AG04450 (cell line): ENCODE measurements at regions of chr11 and their contacts with region 1.

Region 1: GRCh38 chr11:19903620-19904069 is 191.0 kb downstream of the NAV2 start:
- DNase-seq: peak; percentile 64
- H3K4me3 ChIP-seq: no peak overlapping the region
- H3K27ac ChIP-seq: no peak overlapping the region
- H3K27me3 ChIP-seq: no peaks in the 10 kb centered on the region
- CTCF ChIP-seq: peak; percentile 87

Region 2: GRCh38 chr11:19561011-19561410 is 342.6 kb before region 1 on chr11:
- CTCF ChIA-PET with region 1: interaction called, 182 read pairs
- POLR2A ChIA-PET with region 1: no interaction called
- DNase-seq: no peak
- H3K4me3 ChIP-seq: no peak overlapping the region
- H3K27ac ChIP-seq: no peak overlapping the region
- H3K27me3 ChIP-seq: peaks cover 13% of the 10 kb centered on the region
- CTCF ChIP-seq: no peak

Region 3: GRCh38 chr11:19703211-19703610 is 200.4 kb before region 1 on chr11:
- CTCF ChIA-PET with region 1: no interaction called
- POLR2A ChIA-PET with region 1: no interaction called
- DNase-seq: no peak
- H3K4me3 ChIP-seq: no peak overlapping the region
- H3K27ac ChIP-seq: no peak overlapping the region
- H3K27me3 ChIP-seq: no peaks in the 10 kb centered on the region
- CTCF ChIP-seq: no peak

Region 4: GRCh38 chr11:19742588-19743292 is 160.9 kb before region 1 on chr11:
- CTCF ChIA-PET with region 1: interaction called, 48 read pairs
- POLR2A ChIA-PET with region 1: no interaction called
- DNase-seq: peak; percentile 50
- H3K4me3 ChIP-seq: no peak overlapping the region
- H3K27ac ChIP-seq: no peak overlapping the region
- H3K27me3 ChIP-seq: no peaks in the 10 kb centered on the region
- CTCF ChIP-seq: peak; percentile 88

Region 5: GRCh38 chr11:19892387-19892786 is 11.3 kb before region 1 on chr11:
- CTCF ChIA-PET with region 1: interaction called, 10 read pairs
- POLR2A ChIA-PET with region 1: interaction called, 3 read pairs
- DNase-seq: no peak
- H3K4me3 ChIP-seq: no peak overlapping the region
- H3K27ac ChIP-seq: no peak overlapping the region
- H3K27me3 ChIP-seq: no peaks in the 10 kb centered on the region
- CTCF ChIP-seq: no peak

Region 6: GRCh38 chr11:19938169-19938856 is 34.7 kb after region 1 on chr11:
- CTCF ChIA-PET with region 1: interaction called, 12 read pairs
- POLR2A ChIA-PET with region 1: no interaction called
- DNase-seq: no peak
- H3K4me3 ChIP-seq: no peak overlapping the region
- H3K27ac ChIP-seq: no peak overlapping the region
- H3K27me3 ChIP-seq: no peaks in the 10 kb centered on the region
- CTCF ChIP-seq: peak; percentile 78

Region 7: GRCh38 chr11:19978668-19979518 is 75.2 kb after region 1 on chr11:
- CTCF ChIA-PET with region 1: no interaction called
- POLR2A ChIA-PET with region 1: no interaction called
- DNase-seq: peak; percentile 65
- H3K4me3 ChIP-seq: no peak overlapping the region
- H3K27ac ChIP-seq: peak overlapping the region; percentile 79
- H3K27me3 ChIP-seq: no peaks in the 10 kb centered on the region
- CTCF ChIP-seq: no peak

Region 8: DNA sequence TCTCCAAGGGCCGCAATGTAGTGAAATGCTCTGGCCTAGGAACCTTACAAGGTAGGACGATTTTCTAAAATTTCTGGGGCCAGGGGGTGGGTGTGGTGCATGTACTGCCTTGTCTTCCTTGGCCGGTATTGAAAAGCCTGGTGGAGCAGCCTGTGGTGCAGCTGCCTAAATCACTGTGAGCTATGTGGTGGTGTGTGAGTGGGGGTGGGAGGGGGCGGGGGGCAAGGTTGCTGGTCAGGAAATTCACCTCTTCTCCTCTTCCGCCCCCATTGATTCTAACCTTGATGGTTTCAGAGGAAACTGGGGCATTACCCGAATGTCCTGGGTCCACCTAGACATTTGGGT is 119.4 kb after region 1 on chr11:
- CTCF ChIA-PET with region 1: no interaction called
- POLR2A ChIA-PET with region 1: no interaction called
- DNase-seq: no peak
- H3K4me3 ChIP-seq: peak overlapping the region; percentile 39
- H3K27ac ChIP-seq: peak overlapping the region; percentile 43
- H3K27me3 ChIP-seq: no peaks in the 10 kb centered on the region
- CTCF ChIP-seq: no peak

Region 9: GRCh38 chr11:20110908-20111669 is 207.4 kb after region 1 on chr11:
- CTCF ChIA-PET with region 1: interaction called, 15 read pairs
- POLR2A ChIA-PET with region 1: no interaction called
- DNase-seq: no peak
- H3K4me3 ChIP-seq: no peak overlapping the region
- H3K27ac ChIP-seq: peak overlapping the region; percentile 97
- H3K27me3 ChIP-seq: no peaks in the 10 kb centered on the region
- CTCF ChIP-seq: peak; percentile 88